ENCODE measurements at regions of chr7 and their contacts with region 1.

Region 1: DNA sequence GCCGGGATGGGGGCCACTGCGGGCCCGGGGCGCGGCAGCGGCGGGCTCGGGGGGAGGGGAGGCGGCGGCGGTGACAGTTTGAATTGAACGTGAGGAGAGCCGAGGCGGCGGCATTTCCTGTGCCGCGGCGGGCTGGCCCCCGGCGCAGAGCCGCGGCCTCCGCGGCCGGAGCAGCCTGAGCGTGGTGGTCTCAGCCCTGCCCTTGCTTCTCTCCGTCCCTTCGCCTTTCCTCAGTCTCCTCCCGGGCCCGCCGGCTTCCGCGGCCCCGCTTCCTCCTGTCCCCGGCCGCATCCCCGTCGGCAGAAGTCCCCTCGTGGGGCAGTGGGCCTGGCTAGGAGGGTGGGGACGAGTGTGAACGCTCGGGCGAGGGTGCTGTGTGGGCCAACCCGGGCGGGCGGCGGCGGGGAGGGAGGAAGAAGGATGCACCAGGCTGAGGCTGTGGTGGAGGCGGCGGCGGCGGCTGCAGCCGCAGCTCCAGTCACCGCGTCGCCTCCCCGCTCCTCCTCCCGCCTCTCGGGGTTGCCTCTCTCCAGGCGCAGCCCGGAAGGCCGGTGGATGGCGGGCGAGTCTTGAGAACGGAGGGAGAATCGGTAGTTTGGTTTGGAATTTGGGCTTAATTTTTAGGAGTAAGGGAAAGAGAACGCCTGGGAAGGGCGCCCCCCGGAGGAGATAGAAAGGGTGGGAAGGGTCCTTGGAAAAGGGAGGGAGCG is 690 bp downstream of the SEPTIN7 start:
- DNase-seq: peak; percentile 61 to 76
- H3K4me3 ChIP-seq: peak overlapping the region; percentile 69
- H3K27ac ChIP-seq: peak overlapping the region; percentile 92
- H3K4me1 ChIP-seq: peaks cover 31% of the 10 kb centered on the region
- H3K27me3 ChIP-seq: no peaks in the 10 kb centered on the region
- CTCF ChIP-seq: peak; percentile 86

Region 2: GRCh38 chr7:35694781-35695472 is 106.6 kb before region 1 on chr7 and contains the start of gene HERPUD2:
- CTCF ChIA-PET with region 1: interaction called, 9 read pairs
- POLR2A ChIA-PET with region 1: interaction called, 30 read pairs
- intact Hi-C with region 1: loop called (anchors 1 kb)
- DNase-seq: peak; percentile 92 to 99
- H3K4me3 ChIP-seq: peak within 1 kb of the TSS; percentile 96
- H3K27ac ChIP-seq: peak within 1 kb of the TSS; percentile 77
- H3K4me1 ChIP-seq: peaks cover 61% of the 10 kb centered on the region
- H3K27me3 ChIP-seq: no peaks in the 10 kb centered on the region
- CTCF ChIP-seq: no peak
- total RNA-seq, gene HERPUD2: 33.8 and 53.4 TPM in 2 replicates

Region 3: DNA sequence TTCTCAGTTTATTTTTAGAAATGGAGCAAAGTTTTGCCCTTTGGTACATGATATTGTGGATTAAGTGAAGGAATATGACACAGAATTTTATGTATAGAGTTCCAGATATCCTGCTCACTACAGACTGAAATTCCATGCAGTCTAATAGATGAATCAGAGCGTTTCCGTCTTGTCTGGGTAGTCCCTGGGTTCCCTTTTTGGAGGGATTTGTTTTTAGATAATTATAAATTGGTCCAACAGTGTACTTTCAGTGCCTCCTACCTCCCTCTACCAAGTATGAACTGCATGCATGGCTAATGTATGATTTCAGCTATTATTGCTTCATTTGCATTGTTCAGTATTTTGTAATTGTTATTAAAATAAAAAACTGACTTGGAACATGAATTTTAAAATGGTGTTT is 73.7 kb after region 1 on chr7:
- CTCF ChIA-PET with region 1: no interaction called
- POLR2A ChIA-PET with region 1: no interaction called
- intact Hi-C with region 1: loop called (anchors 5 kb)
- DNase-seq: no peak
- H3K4me3 ChIP-seq: no peak overlapping the region
- H3K27ac ChIP-seq: no peak overlapping the region
- H3K4me1 ChIP-seq: no peaks in the 10 kb centered on the region
- H3K27me3 ChIP-seq: no peaks in the 10 kb centered on the region
- CTCF ChIP-seq: no peak

Region 4: GRCh38 chr7:36366718-36367560 is 565.4 kb after region 1 on chr7:
- CTCF ChIA-PET with region 1: no interaction called
- POLR2A ChIA-PET with region 1: interaction called, 10 read pairs
- intact Hi-C with region 1: no loop called
- DNase-seq: peak; percentile 84 to 97
- H3K4me3 ChIP-seq: peak overlapping the region; percentile 86
- H3K27ac ChIP-seq: no peak overlapping the region; the same call in 1 of the 2 replicates
- H3K4me1 ChIP-seq: peaks cover 13% of the 10 kb centered on the region
- H3K27me3 ChIP-seq: no peaks in the 10 kb centered on the region
- CTCF ChIP-seq: peak; percentile 95

Measured in PC-9 (cell line).